Heart left ventricle (tissue), 16 donors: ENCODE measurements at regions of chr17 and their contacts with region 1.

Region 1: GRCh38 chr17:46782250-46782953 is 36.1 kb downstream of the WNT3 start:
- DNase-seq: no peak
- ATAC-seq: peak in 3 of 4 donors; percentile 40 to 64 (median 47)
- H3K4me3 ChIP-seq: no peak overlapping the region
- H3K27ac ChIP-seq: no peak overlapping the region
- H3K4me1 ChIP-seq: no peaks in the 10 kb centered on the region
- H3K27me3 ChIP-seq: peaks cover 0 to 3% (median 0%) of the 10 kb centered on the region in 9 donors
- CTCF ChIP-seq: peak; percentile 21 to 60 (median 38)
- POLR2A ChIP-seq: no peak

Region 2: DNA sequence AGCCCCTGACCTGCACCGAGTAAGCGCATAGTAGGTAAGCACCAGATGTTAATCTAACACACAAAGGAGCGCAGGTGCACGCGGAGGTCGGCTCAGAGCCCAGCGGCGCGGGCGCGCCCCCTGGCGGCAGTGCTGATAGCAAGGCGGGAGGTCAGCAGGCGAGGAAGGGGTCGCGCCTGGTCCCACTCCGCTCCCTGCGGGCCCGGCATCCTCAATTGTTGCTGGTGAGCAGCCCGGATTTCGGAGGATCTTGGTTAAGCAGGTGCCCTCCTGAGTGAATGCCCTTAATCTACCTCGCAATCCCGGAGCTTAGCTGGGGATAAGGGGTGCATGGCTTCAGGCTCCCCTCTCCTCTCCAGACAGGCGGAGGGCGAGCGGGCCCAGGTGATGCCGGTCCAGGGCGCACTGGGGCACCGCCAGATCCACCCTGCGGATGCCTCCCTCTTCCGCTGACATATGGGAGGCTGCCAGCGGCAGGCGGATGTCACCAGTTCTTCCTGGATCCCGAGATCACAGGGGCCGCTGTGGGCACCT is 40.1 kb after region 1 on chr17:
- intact Hi-C with region 1: no loop called
- DNase-seq: no peak
- ATAC-seq: no peak
- H3K4me3 ChIP-seq: no peak overlapping the region
- H3K27ac ChIP-seq: no peak overlapping the region
- H3K4me1 ChIP-seq: peaks cover 0 to 32% (median 19%) of the 10 kb centered on the region in 12 donors
- H3K27me3 ChIP-seq: peaks cover 35 to 65% (median 55%) of the 10 kb centered on the region in 9 donors
- CTCF ChIP-seq: peak; percentile 10 to 54 (median 46)
- POLR2A ChIP-seq: no peak

Region 3: GRCh38 chr17:46832945-46833839 is 50.8 kb after region 1 on chr17:
- intact Hi-C with region 1: loop called in 1 of 10 experiments (anchors 10 kb)
- DNase-seq: peak in 1 of 5 donors; percentile 80
- ATAC-seq: peak; percentile 56 to 91 (median 77)
- H3K4me3 ChIP-seq: no peak overlapping the region
- H3K27ac ChIP-seq: peak overlapping the region in 1 of 12 donors; percentile 28
- H3K4me1 ChIP-seq: no peaks in the 10 kb centered on the region
- H3K27me3 ChIP-seq: no peaks in the 10 kb centered on the region
- CTCF ChIP-seq: no peak
- POLR2A ChIP-seq: no peak

Region 4: GRCh38 chr17:46847204-46848191 is 65.1 kb after region 1 on chr17:
- intact Hi-C with region 1: no loop called
- DNase-seq: no peak
- ATAC-seq: no peak
- H3K4me3 ChIP-seq: no peak overlapping the region
- H3K27ac ChIP-seq: no peak overlapping the region
- H3K4me1 ChIP-seq: peaks cover 0 to 16% (median 5%) of the 10 kb centered on the region in 12 donors
- H3K27me3 ChIP-seq: peaks cover 5 to 37% (median 20%) of the 10 kb centered on the region in 9 donors
- CTCF ChIP-seq: no peak
- POLR2A ChIP-seq: no peak